ENCODE measurements at regions of chr10 and their contacts with region 1.

Region 1: GRCh38 chr10:50375051-50375452 is 123.7 kb upstream of the ASAH2 start:
- DNase-seq: no peak
- ATAC-seq: no peak
- H3K4me3 ChIP-seq: no peak overlapping the region
- H3K27ac ChIP-seq: peak overlapping the region in 4 of 10 donors; percentile 62 to 77 (median 72)
- H3K4me1 ChIP-seq: peaks cover 0 to 45% (median 32%) of the 10 kb centered on the region in 9 donors
- H3K27me3 ChIP-seq: no peaks in the 10 kb centered on the region
- CTCF ChIP-seq: no peak

Region 2: DNA sequence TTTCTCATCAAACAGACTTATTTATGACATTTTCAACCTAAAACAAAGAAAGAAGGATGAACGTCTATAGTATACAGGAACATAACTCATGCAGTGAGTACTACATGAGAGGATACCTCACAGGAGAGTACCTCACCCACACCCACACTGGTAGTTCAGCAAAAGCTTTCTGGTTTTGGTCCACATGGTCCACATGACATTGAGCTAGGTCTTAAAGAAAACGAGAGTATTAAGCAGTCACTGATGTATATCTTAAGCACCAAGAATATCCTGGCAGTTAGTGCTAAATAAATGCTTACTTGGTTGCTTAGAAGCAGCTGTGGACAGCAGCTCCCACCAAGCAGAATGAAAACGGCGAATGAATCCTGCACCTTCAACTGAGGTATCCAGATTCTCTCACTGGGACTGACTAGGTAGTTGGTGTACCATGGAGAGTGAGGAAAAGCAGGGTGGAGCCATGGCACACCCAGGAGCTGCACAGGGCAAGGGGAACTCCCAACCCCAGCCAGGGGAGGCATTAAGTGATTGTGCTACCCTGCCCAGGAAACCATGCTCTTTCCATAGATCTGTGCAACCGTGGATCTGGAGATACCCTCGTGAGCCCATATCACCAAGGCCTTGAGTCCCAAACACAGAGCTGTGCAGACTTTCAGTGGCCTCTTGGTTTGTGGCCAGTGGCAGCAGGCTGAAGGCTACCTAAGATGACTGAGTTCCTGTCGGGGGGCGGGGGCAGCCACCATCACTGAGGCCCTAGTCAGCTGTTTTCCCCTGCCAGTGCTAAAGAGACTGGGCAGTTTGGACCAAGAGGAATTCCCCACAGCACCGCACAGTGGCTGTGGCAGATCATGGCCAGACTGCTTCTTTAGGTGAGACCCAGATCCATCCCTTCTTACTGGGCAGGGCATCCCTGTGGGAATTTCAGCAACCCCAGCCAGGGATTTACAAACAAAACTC is 105.3 kb after region 1 on chr10:
- intact Hi-C with region 1: no loop called
- DNase-seq: no peak
- ATAC-seq: peak in 1 of 8 donors; percentile 44
- H3K4me3 ChIP-seq: no peak overlapping the region
- H3K27ac ChIP-seq: no peak overlapping the region
- H3K4me1 ChIP-seq: no peaks in the 10 kb centered on the region
- H3K27me3 ChIP-seq: no peaks in the 10 kb centered on the region
- CTCF ChIP-seq: no peak

Region 3: GRCh38 chr10:50527442-50528043 is 152.5 kb after region 1 on chr10:
- intact Hi-C with region 1: loop called in 1 of 10 experiments (anchors 10 kb)
- DNase-seq: no peak
- ATAC-seq: peak in 4 of 8 donors; percentile 62 to 90 (median 74)
- H3K4me3 ChIP-seq: no peak overlapping the region
- H3K27ac ChIP-seq: no peak overlapping the region
- H3K4me1 ChIP-seq: peaks cover 0 to 11% (median 5%) of the 10 kb centered on the region in 9 donors
- H3K27me3 ChIP-seq: no peaks in the 10 kb centered on the region
- CTCF ChIP-seq: no peak